ENCODE measurements at regions of chr15 and their contacts with region 1.

Region 1: DNA sequence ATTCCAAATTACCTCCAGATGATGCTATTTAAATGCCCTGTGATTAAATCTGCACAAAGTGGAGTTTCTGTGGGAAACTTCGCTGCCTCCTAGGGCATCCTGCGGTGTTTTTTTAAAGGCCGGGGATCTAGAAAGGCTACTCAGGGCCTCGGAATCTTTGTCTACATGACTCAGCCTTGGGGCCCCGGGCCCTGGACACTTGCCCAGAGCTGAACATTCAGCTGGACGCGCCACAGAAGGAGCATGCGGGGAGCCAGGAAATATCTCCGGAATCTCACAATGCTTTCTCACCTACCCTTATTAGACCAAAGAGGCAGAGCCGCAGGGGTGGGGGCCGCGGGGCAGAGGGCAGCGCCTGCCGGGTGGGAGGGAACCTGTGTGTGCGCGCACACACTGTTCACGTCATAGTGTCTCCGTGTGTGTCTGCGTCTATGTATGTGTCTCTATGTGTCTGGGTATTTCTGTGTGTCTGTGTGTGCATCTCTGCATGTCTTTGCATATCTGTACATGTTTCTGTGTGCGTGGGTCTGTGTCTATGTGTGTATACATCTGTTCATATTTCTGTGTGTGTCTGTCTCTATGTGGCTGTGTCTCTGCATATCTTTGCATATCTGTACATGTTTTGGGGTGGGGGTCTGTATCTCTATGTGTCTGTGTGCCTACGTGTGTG is 145.4 kb upstream of the TPM1 start:
- DNase-seq: peak; percentile 75 to 97
- H3K4me3 ChIP-seq: peak overlapping the region in 1 of 2 donors; percentile 19
- H3K27ac ChIP-seq: peak overlapping the region; percentile 72 to 81
- H3K4me1 ChIP-seq: peaks cover 8 to 36% of the 10 kb centered on the region in 2 donors
- H3K27me3 ChIP-seq: no peaks in the 10 kb centered on the region
- CTCF ChIP-seq: no peak

Region 2: DNA sequence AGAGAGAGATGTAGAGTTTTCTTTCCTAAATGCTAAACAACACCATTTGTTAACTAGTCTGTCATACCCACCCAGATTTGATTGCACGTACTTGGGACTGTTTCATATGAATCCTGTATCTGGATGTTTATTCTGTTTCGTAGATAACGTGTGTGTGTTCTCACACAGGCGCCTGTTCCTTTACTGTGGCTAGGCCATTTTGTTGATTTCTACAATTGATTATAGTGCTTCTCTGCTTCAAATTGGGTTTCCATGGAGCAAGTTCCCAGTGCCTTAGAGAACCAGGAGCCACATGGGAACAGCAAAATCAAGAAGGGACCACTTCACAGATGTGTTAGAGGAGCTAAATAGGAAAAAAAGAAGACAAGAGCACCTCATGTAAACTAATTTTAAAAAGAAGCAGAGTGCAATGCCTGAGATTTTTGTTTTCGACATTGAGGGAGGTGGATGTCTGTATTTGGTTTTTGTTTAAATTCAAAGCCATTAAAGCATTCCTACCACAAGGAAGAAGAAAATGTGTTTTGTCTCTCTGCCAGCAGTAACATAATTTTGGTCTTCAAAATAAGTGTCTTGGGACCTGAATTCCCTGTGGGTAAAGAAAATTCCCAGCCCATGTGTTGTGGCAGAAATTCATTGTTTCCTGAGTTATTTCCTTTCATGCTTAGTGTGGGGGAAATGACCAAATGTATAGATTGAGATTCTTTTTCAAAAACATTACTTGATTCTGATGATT is 308.0 kb before region 1 on chr15:
- intact Hi-C with region 1: no loop called
- DNase-seq: no peak
- H3K4me3 ChIP-seq: no peak overlapping the region
- H3K27ac ChIP-seq: peak overlapping the region; percentile 52 to 76
- H3K4me1 ChIP-seq: peaks cover 5 to 51% of the 10 kb centered on the region in 2 donors
- H3K27me3 ChIP-seq: no peaks in the 10 kb centered on the region
- CTCF ChIP-seq: no peak

Region 3: GRCh38 chr15:62799919-62800318 is 97.2 kb before region 1 on chr15:
- intact Hi-C with region 1: no loop called
- DNase-seq: no peak
- H3K4me3 ChIP-seq: no peak overlapping the region
- H3K27ac ChIP-seq: no peak overlapping the region
- H3K4me1 ChIP-seq: no peaks in the 10 kb centered on the region
- H3K27me3 ChIP-seq: no peaks in the 10 kb centered on the region
- CTCF ChIP-seq: no peak

Region 4: DNA sequence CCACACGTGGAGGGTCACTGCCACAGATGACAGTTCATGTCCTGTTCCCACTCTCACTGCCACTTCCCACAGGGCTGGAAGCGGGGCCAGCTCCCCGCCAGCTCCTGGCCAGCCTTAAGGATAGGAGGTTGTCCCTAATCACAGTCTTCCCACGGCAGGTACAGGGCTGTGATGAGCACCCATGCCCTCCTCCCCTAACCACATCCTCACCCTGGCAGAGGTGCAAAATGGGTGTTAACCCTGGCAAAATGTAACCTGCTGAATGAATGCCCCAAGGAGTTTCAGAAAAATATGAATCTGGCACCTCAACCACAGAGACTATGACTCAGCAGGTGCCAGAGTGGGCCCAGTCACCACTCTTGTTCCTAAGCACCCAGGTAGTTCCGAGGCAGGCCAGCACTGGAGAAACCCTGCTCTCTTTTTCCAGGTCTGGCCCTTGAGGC is 39.7 kb before region 1 on chr15:
- intact Hi-C with region 1: no loop called
- DNase-seq: no peak
- H3K4me3 ChIP-seq: no peak overlapping the region
- H3K27ac ChIP-seq: no peak overlapping the region
- H3K4me1 ChIP-seq: no peaks in the 10 kb centered on the region
- H3K27me3 ChIP-seq: no peaks in the 10 kb centered on the region
- CTCF ChIP-seq: no peak

Region 5: GRCh38 chr15:62880278-62880677 is 16.8 kb before region 1 on chr15:
- intact Hi-C with region 1: no loop called
- DNase-seq: no peak
- H3K4me3 ChIP-seq: no peak overlapping the region
- H3K27ac ChIP-seq: no peak overlapping the region
- H3K4me1 ChIP-seq: peaks cover 0 to 4% of the 10 kb centered on the region in 2 donors
- H3K27me3 ChIP-seq: no peaks in the 10 kb centered on the region
- CTCF ChIP-seq: no peak

Region 6: DNA sequence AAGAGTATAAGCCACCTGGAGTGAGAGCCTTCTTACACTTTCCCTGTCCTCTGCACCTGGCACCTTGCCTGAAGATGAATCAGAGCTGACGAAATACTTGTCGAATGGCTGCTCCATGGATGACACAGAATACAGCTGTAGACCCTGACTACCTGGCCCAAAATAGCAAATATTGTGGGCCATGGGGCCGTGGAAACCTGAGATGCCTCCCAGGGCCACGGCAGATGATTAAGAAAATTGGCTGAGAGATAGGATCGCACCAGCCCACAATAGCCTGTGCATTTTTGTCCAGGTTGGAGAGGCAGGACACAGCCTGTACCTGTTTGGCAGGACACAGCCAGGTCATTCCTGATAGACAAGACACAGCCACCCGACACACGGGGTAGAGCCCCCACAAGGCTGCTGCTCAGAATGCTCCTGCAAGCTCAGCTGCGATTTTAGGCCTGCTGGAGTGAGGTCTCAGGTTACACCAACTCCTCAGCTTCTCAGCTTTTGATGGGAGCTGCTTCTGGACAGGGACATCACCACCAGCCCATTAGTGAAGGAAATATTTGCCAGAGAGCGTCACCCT is 122.5 kb after region 1 on chr15:
- intact Hi-C with region 1: loop called (anchors 5 kb)
- DNase-seq: no peak
- H3K4me3 ChIP-seq: no peak overlapping the region
- H3K27ac ChIP-seq: no peak overlapping the region
- H3K4me1 ChIP-seq: peaks cover 6 to 32% of the 10 kb centered on the region in 2 donors
- H3K27me3 ChIP-seq: no peaks in the 10 kb centered on the region
- CTCF ChIP-seq: no peak